Right cardiac atrium (tissue), 5 donors: ENCODE measurements at regions of chr1 and their contacts with region 1.

Region 1: GRCh38 chr1:153494976-153495535 is 34.6 kb upstream of the S100A7 start:
- DNase-seq: peak; percentile 82 to 93 (median 91)
- ATAC-seq: peak; percentile 65 to 69
- H3K4me3 ChIP-seq: no peak overlapping the region
- H3K27ac ChIP-seq: no peak overlapping the region
- H3K4me1 ChIP-seq: peaks cover under 1% of the 10 kb centered on the region
- H3K27me3 ChIP-seq: no peaks in the 10 kb centered on the region

Region 2: GRCh38 chr1:152960452-152961044 is 534.5 kb before region 1 on chr1:
- intact Hi-C with region 1: no loop called
- DNase-seq: no peak
- ATAC-seq: no peak
- H3K4me3 ChIP-seq: no peak overlapping the region
- H3K27ac ChIP-seq: no peak overlapping the region
- H3K4me1 ChIP-seq: no peaks in the 10 kb centered on the region
- H3K27me3 ChIP-seq: no peaks in the 10 kb centered on the region

Region 3: DNA sequence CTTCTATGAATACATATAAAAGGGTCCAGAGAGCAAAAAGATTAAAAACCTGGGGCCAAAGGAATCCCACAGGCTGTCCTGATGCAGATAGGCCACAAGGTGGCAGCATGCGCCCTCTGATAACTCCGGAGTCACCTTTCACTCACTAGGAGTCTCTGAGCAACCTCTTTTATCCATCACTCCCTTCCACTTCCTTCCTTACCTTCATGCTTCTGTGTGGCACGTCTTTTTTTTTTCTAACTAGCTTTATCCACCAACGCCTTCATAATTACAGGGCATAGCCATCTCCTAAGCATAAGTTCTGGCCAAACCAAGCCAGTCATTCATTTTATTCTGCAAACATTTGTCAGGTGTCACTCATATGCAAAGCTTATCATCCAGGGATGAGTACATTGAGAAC is 142.5 kb before region 1 on chr1:
- intact Hi-C with region 1: loop called (anchors 2 to 5 kb)
- DNase-seq: peak; percentile 50 to 84 (median 80)
- ATAC-seq: peak; percentile 73 to 82
- H3K4me3 ChIP-seq: no peak overlapping the region
- H3K27ac ChIP-seq: no peak overlapping the region
- H3K4me1 ChIP-seq: no peaks in the 10 kb centered on the region
- H3K27me3 ChIP-seq: no peaks in the 10 kb centered on the region

Region 4: DNA sequence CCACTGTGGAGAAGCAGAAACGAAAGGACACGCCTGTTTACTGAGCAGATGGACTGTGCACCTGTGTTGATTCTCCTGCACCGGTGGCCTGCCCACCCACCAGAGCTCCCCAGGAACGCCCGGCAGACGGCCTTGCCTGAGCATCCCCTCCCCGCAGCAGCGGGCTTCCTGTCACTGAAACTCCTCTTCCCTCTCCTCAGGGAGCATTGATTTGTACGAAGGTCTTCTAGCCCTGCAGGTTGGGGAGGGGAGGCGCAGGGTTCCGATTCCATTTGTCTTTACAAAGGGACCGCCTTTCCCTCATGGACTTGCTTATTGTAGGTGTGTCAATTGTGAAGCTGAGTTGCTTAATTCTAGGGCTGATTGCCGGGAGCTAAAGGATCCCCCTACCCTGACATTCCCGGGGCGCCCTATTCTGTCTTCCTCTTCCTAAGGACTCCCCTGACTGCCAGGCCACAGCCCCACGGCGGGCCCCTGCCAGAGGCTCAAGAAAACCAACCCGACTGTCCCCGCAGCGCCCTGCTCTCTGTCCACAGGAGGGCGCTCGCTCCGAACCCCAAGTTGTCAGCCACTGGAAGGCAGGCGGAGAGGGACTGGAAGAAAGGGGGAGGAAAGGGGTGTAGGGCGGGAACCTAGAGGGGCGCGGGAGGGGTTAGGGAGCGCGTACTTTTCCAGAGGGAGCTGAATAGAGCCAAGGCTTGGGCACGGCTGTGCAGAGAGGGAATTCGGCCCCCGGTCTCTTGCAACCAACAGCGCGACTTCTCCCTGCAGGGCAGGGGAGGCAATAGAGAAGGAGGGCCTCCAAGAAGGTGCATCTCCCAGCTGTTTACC is 37.9 kb after region 1 on chr1:
- intact Hi-C with region 1: no loop called
- DNase-seq: peak; percentile 87 to 96 (median 94)
- ATAC-seq: peak; percentile 65 to 73
- H3K4me3 ChIP-seq: peak overlapping the region; percentile 73
- H3K27ac ChIP-seq: peak overlapping the region; percentile 61
- H3K4me1 ChIP-seq: no peaks in the 10 kb centered on the region
- H3K27me3 ChIP-seq: no peaks in the 10 kb centered on the region

Region 5: DNA sequence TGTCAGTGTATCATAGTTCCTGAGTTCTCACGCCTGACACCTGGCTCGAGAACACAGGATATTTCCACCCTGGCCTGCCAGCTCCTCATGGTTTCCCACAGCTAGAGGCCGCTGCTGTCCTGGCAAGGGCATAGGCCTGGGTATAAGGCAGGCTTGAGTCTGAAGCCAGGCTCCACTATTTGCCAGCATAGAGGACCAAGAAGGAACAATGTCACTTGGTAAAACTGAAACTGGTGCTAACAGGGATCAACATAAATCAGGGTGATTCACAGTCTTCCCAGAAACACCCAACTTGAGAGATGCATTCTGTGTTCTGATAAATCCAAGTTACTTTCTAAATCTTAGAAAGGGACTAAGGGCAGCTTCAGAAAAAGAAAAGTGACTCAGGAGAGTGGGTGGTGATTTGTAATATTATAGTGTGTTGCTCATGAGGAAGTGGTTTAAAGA is 77.5 kb after region 1 on chr1:
- intact Hi-C with region 1: no loop called
- DNase-seq: peak; percentile 83 to 92 (median 90)
- ATAC-seq: peak; percentile 89 to 91
- H3K4me3 ChIP-seq: no peak overlapping the region
- H3K27ac ChIP-seq: peak overlapping the region; percentile 12
- H3K4me1 ChIP-seq: peaks cover 6% of the 10 kb centered on the region
- H3K27me3 ChIP-seq: no peaks in the 10 kb centered on the region